GM10248 (cell line): ENCODE measurements at regions of chr19 and their contacts with region 1.

Region 1: DNA sequence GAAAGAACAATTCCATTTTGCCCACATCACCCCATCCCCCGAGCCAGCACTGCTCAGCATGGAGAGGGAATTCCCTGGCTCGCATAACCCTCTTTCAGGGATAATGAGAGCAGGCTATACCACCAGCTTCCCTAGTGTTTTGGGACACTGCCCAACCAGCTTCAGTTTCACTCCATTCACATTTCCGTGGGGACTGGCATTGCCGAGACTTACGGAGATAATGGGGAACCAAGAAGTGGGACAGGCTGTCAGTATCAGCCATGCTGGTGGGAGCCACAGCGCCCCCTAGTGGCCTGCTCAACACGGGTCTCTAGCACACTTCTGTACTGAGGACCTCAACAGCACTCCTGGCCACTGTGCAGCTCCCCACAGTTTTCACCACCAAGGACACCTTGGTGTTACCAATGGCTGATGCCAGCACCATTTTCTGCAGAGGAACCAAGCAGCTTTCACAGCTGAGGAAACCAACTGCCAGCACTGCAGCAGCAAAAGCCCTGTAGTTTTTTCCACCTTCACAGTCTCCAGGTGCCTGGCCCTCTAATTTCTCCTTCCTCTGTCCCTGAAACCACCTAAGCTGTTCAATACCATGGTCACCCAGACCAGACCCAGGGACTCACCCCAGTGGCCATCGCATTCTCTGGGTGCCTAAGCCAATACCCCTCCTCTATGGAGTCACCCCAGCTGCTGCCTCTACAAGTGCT is 23.7 kb downstream of the SLC6A16 start:
- DNase-seq: peak; percentile 92
- CTCF ChIP-seq: peak; percentile 80

Region 2: GRCh38 chr19:49264258-49264657 is 37.1 kb before region 1 on chr19:
- CTCF ChIA-PET with region 1: interaction called, 22 read pairs
- POLR2A ChIA-PET with region 1: no interaction called
- DNase-seq: no peak
- CTCF ChIP-seq: no peak

Region 3: DNA sequence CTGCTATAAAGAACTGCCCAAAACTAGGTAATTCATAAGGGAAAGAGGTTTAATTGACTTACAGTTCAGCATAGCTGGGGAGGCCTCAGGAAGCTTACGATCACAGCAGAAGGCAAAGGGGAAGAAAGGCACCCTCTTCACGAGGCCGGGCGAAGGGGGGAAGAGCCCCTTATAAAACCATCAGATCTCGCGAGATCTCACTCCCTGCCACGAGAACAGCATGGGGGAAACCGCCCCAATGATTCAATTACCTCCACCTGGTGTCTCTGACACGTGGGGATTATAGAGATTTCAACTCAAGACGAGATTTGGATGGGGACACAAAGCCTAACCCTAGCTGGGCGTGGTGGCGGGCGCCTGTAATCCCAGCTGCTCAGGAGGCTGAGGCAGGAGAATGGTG is 19.1 kb before region 1 on chr19:
- CTCF ChIA-PET with region 1: interaction called, 27 read pairs
- POLR2A ChIA-PET with region 1: no interaction called
- DNase-seq: no peak
- CTCF ChIP-seq: no peak

Region 4: DNA sequence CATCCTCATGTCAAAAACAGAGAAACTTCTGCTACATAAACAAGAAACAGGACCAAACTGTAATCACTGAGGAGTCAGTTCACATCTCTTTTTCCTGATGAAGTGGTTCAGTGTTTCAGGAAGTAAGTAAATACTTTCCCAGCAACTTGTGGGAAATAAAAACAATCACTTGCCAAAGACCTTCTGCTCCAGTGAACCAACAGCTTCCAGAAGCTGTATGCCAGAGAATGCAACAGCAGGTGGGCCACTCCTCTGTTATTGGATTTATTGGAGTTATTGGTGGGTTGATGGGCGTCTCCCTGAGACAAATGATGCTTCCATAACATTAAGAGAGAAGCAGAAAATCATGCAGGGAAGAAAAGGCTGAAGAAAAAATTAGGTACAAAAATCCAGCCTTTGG is 13.8 kb after region 1 on chr19:
- CTCF ChIA-PET with region 1: interaction called, 42 read pairs
- POLR2A ChIA-PET with region 1: no interaction called
- DNase-seq: no peak
- CTCF ChIP-seq: no peak

Region 5: DNA sequence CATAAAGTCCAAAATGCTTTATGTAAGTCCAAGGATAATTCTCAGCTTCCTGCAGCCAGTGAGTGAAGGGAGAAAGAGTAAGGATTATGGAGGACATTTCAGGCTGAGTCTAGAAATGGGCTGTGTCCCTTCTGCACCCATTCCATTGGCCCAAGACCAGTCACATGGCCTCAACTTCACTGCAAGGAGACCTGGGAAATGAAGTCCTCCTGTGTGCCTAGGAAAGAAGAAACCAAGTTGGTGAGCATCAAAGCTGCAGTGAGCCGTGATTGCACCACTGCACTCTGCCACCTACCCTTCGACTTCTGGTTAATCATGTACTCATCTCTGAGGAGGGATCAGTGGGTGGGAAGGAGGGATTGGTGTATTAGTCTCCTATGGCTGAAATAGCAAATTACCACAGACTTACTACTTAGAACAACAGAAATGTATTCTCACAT is 30.3 kb after region 1 on chr19:
- CTCF ChIA-PET with region 1: interaction called, 17 read pairs
- POLR2A ChIA-PET with region 1: no interaction called
- DNase-seq: peak; percentile 74
- CTCF ChIP-seq: no peak